ENCODE measurements at regions of chr14 and their contacts with region 1.

Region 1: GRCh38 chr14:51860164-51860824 is at the start of gene GNG2:
- DNase-seq: peak; percentile 83 to 92 (median 87)
- H3K4me3 ChIP-seq: peak within 1 kb of the TSS; percentile 49 to 77
- H3K4me3 Mint-ChIP-seq: peak within 1 kb of the TSS; percentile 91 to 98 (median 96)
- H3K27ac ChIP-seq: peak within 1 kb of the TSS; percentile 84
- H3K27ac Mint-ChIP-seq: peak within 1 kb of the TSS; percentile 96 to 100 (median 99)
- H3K4me1 ChIP-seq: peaks cover 57% of the 10 kb centered on the region
- H3K4me1 Mint-ChIP-seq: peaks cover 47 to 84% (median 63%) of the 10 kb centered on the region in 4 donors
- H3K27me3 ChIP-seq: no peaks in the 10 kb centered on the region
- H3K27me3 Mint-ChIP-seq: no peaks in the 10 kb centered on the region
- total RNA-seq, gene GNG2: 81.3 to 84.8 TPM

Region 2: DNA sequence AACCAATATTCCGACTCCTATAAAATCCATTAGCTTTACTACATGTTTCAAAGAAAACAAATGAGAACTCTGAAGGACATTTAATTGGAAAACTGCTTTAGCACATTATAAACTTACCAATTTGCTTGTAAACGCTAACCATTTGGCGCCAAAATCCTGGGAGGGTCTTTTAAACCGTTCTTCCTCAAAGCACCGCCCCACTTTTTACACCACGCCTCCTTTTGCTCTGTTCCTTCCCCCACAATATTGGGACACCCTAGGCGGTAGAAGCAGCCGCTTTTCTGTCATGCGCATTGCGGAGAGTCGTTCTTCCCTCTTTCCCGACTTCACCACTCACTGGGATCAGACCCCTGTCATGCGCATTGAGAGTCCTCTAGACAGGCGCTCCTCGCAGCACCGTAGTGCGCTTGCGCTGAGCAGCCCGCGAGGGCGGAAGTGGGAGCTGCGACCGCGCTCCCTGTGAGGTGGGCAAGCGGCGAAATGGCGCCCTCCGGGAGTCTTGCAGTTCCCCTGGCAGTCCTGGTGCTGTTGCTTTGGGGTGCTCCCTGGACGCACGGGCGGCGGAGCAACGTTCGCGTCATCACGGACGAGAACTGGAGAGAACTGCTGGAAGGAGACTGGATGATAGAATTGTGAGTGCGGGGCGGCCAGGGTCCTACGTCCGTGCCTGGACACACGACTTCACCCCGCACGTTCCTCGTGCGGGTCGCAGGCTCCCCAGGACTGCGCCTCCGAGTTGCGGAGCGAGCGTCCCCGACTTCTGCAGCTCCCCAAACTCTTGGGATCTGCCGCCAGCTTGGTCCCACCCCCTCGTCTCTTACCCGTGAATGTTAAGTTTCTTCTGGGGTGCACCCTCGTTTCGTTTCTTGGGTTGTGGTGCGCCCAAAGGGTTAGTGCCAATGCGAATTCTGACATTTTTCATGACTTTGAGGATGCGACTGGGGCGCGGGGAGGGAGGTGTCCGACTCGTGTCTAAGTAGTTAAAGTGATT is 620.2 kb before region 1 on chr14 and contains the start of gene TMX1:
- CTCF ChIA-PET with region 1: no interaction called
- POLR2A ChIA-PET with region 1: no interaction called
- intact Hi-C with region 1: loop called (anchors 10 kb)
- DNase-seq: peak; percentile 80 to 86 (median 82)
- H3K4me3 ChIP-seq: peak within 1 kb of the TSS; percentile 84 to 99
- H3K4me3 Mint-ChIP-seq: peak within 1 kb of the TSS in 1 of 8 donors; percentile 37
- H3K27ac ChIP-seq: peak within 1 kb of the TSS; percentile 65
- H3K27ac Mint-ChIP-seq: no peak within 1 kb of the TSS
- H3K4me1 ChIP-seq: peaks cover 51% of the 10 kb centered on the region
- H3K4me1 Mint-ChIP-seq: peaks cover 15 to 29% (median 21%) of the 10 kb centered on the region in 4 donors
- H3K27me3 ChIP-seq: no peaks in the 10 kb centered on the region
- H3K27me3 Mint-ChIP-seq: no peaks in the 10 kb centered on the region
- total RNA-seq, gene TMX1: 28.5 to 32.9 TPM

Region 3: DNA sequence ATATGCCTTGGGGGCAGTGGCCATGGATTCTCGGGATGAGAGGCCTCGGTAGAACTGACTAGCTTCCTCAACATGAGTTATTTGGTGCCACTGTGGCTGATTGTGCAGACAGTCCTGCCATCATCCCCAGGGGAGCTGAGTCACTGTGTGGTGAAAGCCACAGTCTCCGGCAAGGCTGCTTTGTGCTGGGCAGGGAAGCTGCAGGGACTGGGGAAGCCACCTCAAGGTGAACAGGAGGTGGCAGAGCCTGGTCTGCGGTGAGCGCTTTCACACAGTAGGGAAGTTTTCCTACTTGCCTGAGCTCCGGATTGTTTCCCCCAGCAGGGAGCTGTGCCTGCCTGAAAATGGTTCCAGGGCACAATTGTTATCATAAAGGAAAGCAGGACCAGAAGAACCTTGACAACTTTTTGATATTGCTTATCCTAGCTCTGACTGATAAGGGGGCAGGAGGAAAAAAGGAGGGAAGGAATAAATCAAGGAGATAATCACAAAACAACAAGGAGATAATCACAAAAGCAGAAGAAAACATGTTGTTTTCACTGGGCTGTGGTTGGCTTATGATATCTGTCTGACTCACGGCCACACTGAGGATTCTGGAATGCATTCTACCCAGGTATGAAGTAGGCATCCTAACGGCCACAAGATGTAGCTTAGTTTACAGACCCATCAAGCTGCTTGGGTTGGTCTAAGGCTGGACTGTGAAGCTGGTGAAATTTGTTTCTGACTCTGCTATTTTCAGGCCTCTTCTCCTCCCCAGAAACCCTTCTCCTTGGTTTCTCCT is 32.1 kb before region 1 on chr14:
- CTCF ChIA-PET with region 1: interaction called, 7 read pairs
- POLR2A ChIA-PET with region 1: interaction called, 8 read pairs
- intact Hi-C with region 1: loop called (anchors 5 kb)
- DNase-seq: peak; percentile 30 to 80 (median 41)
- H3K4me3 ChIP-seq: no peak overlapping the region
- H3K4me3 Mint-ChIP-seq: peak overlapping the region in 2 of 8 donors; percentile 3 to 23
- H3K27ac ChIP-seq: no peak overlapping the region
- H3K27ac Mint-ChIP-seq: peak overlapping the region in 2 of 7 donors; percentile 12 to 24
- H3K4me1 ChIP-seq: peaks cover 19% of the 10 kb centered on the region
- H3K4me1 Mint-ChIP-seq: peaks cover 0 to 4% (median 0%) of the 10 kb centered on the region in 4 donors
- H3K27me3 ChIP-seq: no peaks in the 10 kb centered on the region
- H3K27me3 Mint-ChIP-seq: peaks cover 0 to 2% of the 10 kb centered on the region in 2 donors

Region 4: DNA sequence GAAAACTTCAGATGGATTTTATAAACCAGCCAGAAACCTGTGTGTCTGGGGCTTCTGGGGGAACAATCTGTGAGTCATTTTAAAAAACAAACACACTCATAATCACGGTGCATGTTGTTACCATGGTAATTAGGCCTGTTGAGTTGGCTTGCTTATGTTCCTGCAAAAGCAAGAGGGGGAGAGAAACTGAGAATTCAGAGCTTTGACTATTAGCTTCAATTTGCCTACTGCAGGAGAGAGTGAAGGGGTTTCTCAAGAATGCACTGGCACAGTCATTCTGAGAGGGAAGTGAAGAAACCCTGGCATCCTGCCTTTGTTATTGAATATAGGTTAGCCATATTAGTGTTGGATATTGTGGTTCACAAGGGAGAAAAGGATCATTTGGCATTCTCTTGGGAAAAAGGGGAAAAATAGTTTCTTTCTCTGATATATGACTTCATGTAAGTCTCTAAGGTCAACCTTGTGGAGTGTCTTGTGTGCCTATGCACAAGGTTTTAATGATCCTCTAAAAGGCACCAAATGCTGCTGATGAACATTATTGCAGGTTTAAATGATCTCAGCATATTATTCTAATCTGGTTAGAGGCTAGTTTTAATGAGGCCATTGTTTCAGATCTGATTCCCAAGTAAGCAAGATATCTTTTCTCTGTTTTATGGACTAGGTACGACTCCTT is 13.1 kb after region 1 on chr14:
- CTCF ChIA-PET with region 1: interaction called, 5 read pairs
- POLR2A ChIA-PET with region 1: interaction called, 65 read pairs
- intact Hi-C with region 1: loop called (anchors 2 kb)
- DNase-seq: peak in 2 of 5 donors; percentile 30 to 68
- H3K4me3 ChIP-seq: no peak overlapping the region
- H3K4me3 Mint-ChIP-seq: peak overlapping the region in 6 of 8 donors; percentile 16 to 61 (median 42)
- H3K27ac ChIP-seq: peak overlapping the region; percentile 12
- H3K27ac Mint-ChIP-seq: peak overlapping the region; percentile 38 to 87 (median 77)
- H3K4me1 ChIP-seq: peaks cover 91% of the 10 kb centered on the region
- H3K4me1 Mint-ChIP-seq: peaks cover 52 to 65% (median 60%) of the 10 kb centered on the region in 4 donors
- H3K27me3 ChIP-seq: no peaks in the 10 kb centered on the region
- H3K27me3 Mint-ChIP-seq: no peaks in the 10 kb centered on the region

Region 5: GRCh38 chr14:51884086-51884927 is 24.0 kb after region 1 on chr14:
- CTCF ChIA-PET with region 1: interaction called, 7 read pairs
- POLR2A ChIA-PET with region 1: interaction called, 53 read pairs
- intact Hi-C with region 1: no loop called
- DNase-seq: no peak
- H3K4me3 ChIP-seq: no peak overlapping the region
- H3K4me3 Mint-ChIP-seq: peak overlapping the region; percentile 26 to 86 (median 52)
- H3K27ac ChIP-seq: peak overlapping the region; percentile 12
- H3K27ac Mint-ChIP-seq: peak overlapping the region; percentile 43 to 83 (median 78)
- H3K4me1 ChIP-seq: peaks cover 89% of the 10 kb centered on the region
- H3K4me1 Mint-ChIP-seq: peaks cover 49 to 89% (median 73%) of the 10 kb centered on the region in 4 donors
- H3K27me3 ChIP-seq: no peaks in the 10 kb centered on the region
- H3K27me3 Mint-ChIP-seq: no peaks in the 10 kb centered on the region

Region 6: GRCh38 chr14:51908086-51908485 is 47.8 kb after region 1 on chr14:
- CTCF ChIA-PET with region 1: interaction called, 3 read pairs
- POLR2A ChIA-PET with region 1: interaction called, 12 read pairs
- intact Hi-C with region 1: loop called (anchors 1 kb)
- DNase-seq: no peak
- H3K4me3 ChIP-seq: no peak overlapping the region
- H3K4me3 Mint-ChIP-seq: no peak overlapping the region
- H3K27ac ChIP-seq: no peak overlapping the region
- H3K27ac Mint-ChIP-seq: peak overlapping the region in 4 of 7 donors; percentile 23 to 89 (median 54)
- H3K4me1 ChIP-seq: peaks cover 49% of the 10 kb centered on the region
- H3K4me1 Mint-ChIP-seq: peaks cover 40 to 70% (median 59%) of the 10 kb centered on the region in 4 donors
- H3K27me3 ChIP-seq: no peaks in the 10 kb centered on the region
- H3K27me3 Mint-ChIP-seq: no peaks in the 10 kb centered on the region

Region 7: GRCh38 chr14:52313903-52314594 is 453.8 kb after region 1 on chr14 and contains the start of gene PTGER2:
- CTCF ChIA-PET with region 1: no interaction called
- POLR2A ChIA-PET with region 1: interaction called, 4 read pairs
- intact Hi-C with region 1: loop called (anchors 5 kb)
- DNase-seq: peak; percentile 64 to 83 (median 74)
- H3K4me3 ChIP-seq: peak within 1 kb of the TSS; percentile 83 to 86
- H3K4me3 Mint-ChIP-seq: peak within 1 kb of the TSS; percentile 95 to 100 (median 99)
- H3K27ac ChIP-seq: peak within 1 kb of the TSS; percentile 59
- H3K27ac Mint-ChIP-seq: peak within 1 kb of the TSS; percentile 87 to 97 (median 92)
- H3K4me1 ChIP-seq: peaks cover 70% of the 10 kb centered on the region
- H3K4me1 Mint-ChIP-seq: peaks cover 45 to 90% (median 63%) of the 10 kb centered on the region in 4 donors
- H3K27me3 ChIP-seq: no peaks in the 10 kb centered on the region
- H3K27me3 Mint-ChIP-seq: peaks cover 0 to 2% of the 10 kb centered on the region in 2 donors
- total RNA-seq, gene PTGER2: 29.4 to 30.2 TPM

Measured in CD4-positive, alpha-beta memory T cell (primary cell).